CD8-positive, alpha-beta T cell (primary cell): ENCODE measurements at regions of chr12 and their contacts with region 1.

Region 1: DNA sequence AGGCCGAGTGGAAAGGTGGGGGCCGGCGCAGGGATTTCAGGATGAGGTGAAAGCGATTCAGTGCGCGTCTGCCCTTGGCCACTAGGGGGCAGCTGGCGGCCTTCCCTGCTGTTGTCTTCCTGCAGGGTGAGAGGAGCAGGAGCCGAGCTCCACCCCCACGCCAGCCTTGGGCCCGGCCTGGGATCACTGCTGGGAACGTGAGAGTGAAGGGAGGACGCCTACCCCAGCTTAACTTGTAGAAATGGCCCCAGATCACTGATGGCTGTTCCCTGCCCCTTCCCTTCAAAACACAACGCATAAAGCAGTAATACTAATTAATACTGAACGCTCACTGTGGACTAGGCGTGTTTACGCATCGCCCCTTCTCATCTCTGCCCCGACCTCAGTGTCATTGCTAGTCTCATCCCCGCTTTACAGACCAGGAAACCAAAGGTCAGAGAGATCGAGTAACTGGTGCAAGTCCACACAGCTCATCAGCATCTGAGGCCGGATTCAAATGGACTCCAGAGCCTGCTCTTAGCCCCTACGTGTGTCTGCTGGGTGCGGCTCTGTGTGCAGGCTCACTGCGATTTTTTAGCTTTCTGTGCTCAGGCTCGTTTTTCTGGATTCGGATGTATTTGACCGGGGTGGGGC is 24.3 kb downstream of the MVK start:
- DNase-seq: peak; percentile 31 to 76 (median 64)
- ATAC-seq: peak; percentile 70
- H3K4me3 ChIP-seq: no peak overlapping the region
- H3K4me3 Mint-ChIP-seq: no peak overlapping the region
- H3K27ac ChIP-seq: no peak overlapping the region
- H3K27ac Mint-ChIP-seq: no peak overlapping the region
- H3K4me1 ChIP-seq: peaks cover 11% of the 10 kb centered on the region
- H3K4me1 Mint-ChIP-seq: peaks cover 23% of the 10 kb centered on the region
- H3K27me3 ChIP-seq: no peaks in the 10 kb centered on the region
- H3K27me3 Mint-ChIP-seq: no peaks in the 10 kb centered on the region
- CTCF ChIP-seq: peak; percentile 85

Region 2: GRCh38 chr12:109467978-109468682 is 129.8 kb before region 1 on chr12:
- CTCF ChIA-PET with region 1: no interaction called
- POLR2A ChIA-PET with region 1: no interaction called
- intact Hi-C with region 1: no loop called
- DNase-seq: peak in 1 of 9 experiments; percentile 16
- ATAC-seq: no peak
- H3K4me3 ChIP-seq: no peak overlapping the region
- H3K4me3 Mint-ChIP-seq: no peak overlapping the region
- H3K27ac ChIP-seq: no peak overlapping the region
- H3K27ac Mint-ChIP-seq: no peak overlapping the region
- H3K4me1 ChIP-seq: peaks cover 13% of the 10 kb centered on the region
- H3K4me1 Mint-ChIP-seq: peaks cover 48% of the 10 kb centered on the region
- H3K27me3 ChIP-seq: no peaks in the 10 kb centered on the region
- H3K27me3 Mint-ChIP-seq: no peaks in the 10 kb centered on the region
- CTCF ChIP-seq: no peak

Region 3: GRCh38 chr12:109586385-109587296 is 11.3 kb before region 1 on chr12:
- CTCF ChIA-PET with region 1: interaction called, 21 read pairs
- POLR2A ChIA-PET with region 1: interaction called, 4 read pairs
- intact Hi-C with region 1: no loop called
- DNase-seq: no peak
- ATAC-seq: no peak
- H3K4me3 ChIP-seq: no peak overlapping the region
- H3K4me3 Mint-ChIP-seq: no peak overlapping the region
- H3K27ac ChIP-seq: no peak overlapping the region
- H3K27ac Mint-ChIP-seq: no peak overlapping the region
- H3K4me1 ChIP-seq: no peaks in the 10 kb centered on the region
- H3K4me1 Mint-ChIP-seq: no peaks in the 10 kb centered on the region
- H3K27me3 ChIP-seq: no peaks in the 10 kb centered on the region
- H3K27me3 Mint-ChIP-seq: no peaks in the 10 kb centered on the region
- CTCF ChIP-seq: no peak

Region 4: GRCh38 chr12:109612975-109613502 is 15.1 kb after region 1 on chr12:
- CTCF ChIA-PET with region 1: interaction called, 13 read pairs
- POLR2A ChIA-PET with region 1: no interaction called
- intact Hi-C with region 1: no loop called
- DNase-seq: peak in 1 of 9 experiments; percentile 17
- ATAC-seq: no peak
- H3K4me3 ChIP-seq: no peak overlapping the region
- H3K4me3 Mint-ChIP-seq: no peak overlapping the region
- H3K27ac ChIP-seq: no peak overlapping the region
- H3K27ac Mint-ChIP-seq: no peak overlapping the region
- H3K4me1 ChIP-seq: no peaks in the 10 kb centered on the region
- H3K4me1 Mint-ChIP-seq: no peaks in the 10 kb centered on the region
- H3K27me3 ChIP-seq: peaks cover 0 to 3% of the 10 kb centered on the region in 2 experiments
- H3K27me3 Mint-ChIP-seq: peaks cover 44% of the 10 kb centered on the region
- CTCF ChIP-seq: no peak